GM10248 (cell line): ENCODE measurements at regions of chr2 and their contacts with region 1.

Region 1: GRCh38 chr2:30516166-30516565 is 69.1 kb downstream of the LCLAT1 start:
- DNase-seq: no peak
- CTCF ChIP-seq: no peak

Region 2: GRCh38 chr2:30503695-30504052 is 12.5 kb before region 1 on chr2:
- CTCF ChIA-PET with region 1: interaction called, 17 read pairs
- POLR2A ChIA-PET with region 1: no interaction called
- DNase-seq: no peak
- CTCF ChIP-seq: no peak